ENCODE measurements at regions of chr5 and their contacts with region 1.

Region 1: GRCh38 chr5:83927140-83927733 is 206.6 kb upstream of the HAPLN1 start:
- DNase-seq: peak; percentile 75
- H3K4me3 ChIP-seq: no peak overlapping the region
- H3K27ac ChIP-seq: no peak overlapping the region
- H3K4me1 ChIP-seq: peaks cover 5% of the 10 kb centered on the region
- H3K27me3 ChIP-seq: peaks cover 0 to 3% of the 10 kb centered on the region in 2 experiments
- CTCF ChIP-seq: peak; percentile 76 to 84
- POLR2A ChIP-seq: no peak

Region 2: GRCh38 chr5:83718195-83718825 is 208.9 kb before region 1 on chr5:
- CTCF ChIA-PET with region 1: interaction called, 10 read pairs
- POLR2A ChIA-PET with region 1: no interaction called
- dilution Hi-C with region 1: no loop called
- intact Hi-C with region 1: loop called (anchors 1 kb)
- DNase-seq: peak; percentile 70
- H3K4me3 ChIP-seq: no peak overlapping the region
- H3K27ac ChIP-seq: no peak overlapping the region
- H3K4me1 ChIP-seq: peaks cover 4% of the 10 kb centered on the region
- H3K27me3 ChIP-seq: peaks cover 8% of the 10 kb centered on the region in 2 experiments
- CTCF ChIP-seq: peak; percentile 67 to 74
- POLR2A ChIP-seq: no peak

Region 3: GRCh38 chr5:83937837-83938236 is 10.6 kb after region 1 on chr5:
- CTCF ChIA-PET with region 1: interaction called, 18 read pairs
- POLR2A ChIA-PET with region 1: no interaction called
- dilution Hi-C with region 1: no loop called
- intact Hi-C with region 1: no loop called
- DNase-seq: no peak
- H3K4me3 ChIP-seq: no peak overlapping the region
- H3K27ac ChIP-seq: no peak overlapping the region
- H3K4me1 ChIP-seq: no peaks in the 10 kb centered on the region
- H3K27me3 ChIP-seq: no peaks in the 10 kb centered on the region
- CTCF ChIP-seq: no peak
- POLR2A ChIP-seq: no peak

Region 4: DNA sequence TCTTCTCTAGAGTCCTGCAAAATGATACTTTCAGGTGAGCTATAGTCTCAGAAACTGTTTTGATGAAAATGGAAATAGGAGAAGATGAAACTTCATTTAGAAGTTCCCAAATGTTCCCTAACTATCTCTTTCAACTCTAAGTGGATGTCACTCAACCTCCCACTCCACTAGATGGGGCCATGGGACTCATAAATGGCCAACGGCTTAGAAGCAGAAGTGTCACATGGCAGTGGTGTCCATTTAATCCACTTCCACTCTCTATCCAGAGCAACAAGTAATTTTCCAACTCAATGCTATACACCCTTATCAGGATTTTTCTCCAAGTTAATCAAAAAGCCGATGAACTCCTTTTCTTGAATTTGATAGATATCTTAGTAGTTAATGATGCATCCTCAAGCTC is 161.8 kb after region 1 on chr5:
- CTCF ChIA-PET with region 1: interaction called, 5 read pairs
- POLR2A ChIA-PET with region 1: no interaction called
- dilution Hi-C with region 1: no loop called
- intact Hi-C with region 1: loop called (anchors 5 kb)
- DNase-seq: peak; percentile 16
- H3K4me3 ChIP-seq: no peak overlapping the region
- H3K27ac ChIP-seq: no peak overlapping the region
- H3K4me1 ChIP-seq: no peaks in the 10 kb centered on the region
- H3K27me3 ChIP-seq: no peaks in the 10 kb centered on the region
- CTCF ChIP-seq: peak; percentile 6 to 25
- POLR2A ChIP-seq: no peak

Region 5: DNA sequence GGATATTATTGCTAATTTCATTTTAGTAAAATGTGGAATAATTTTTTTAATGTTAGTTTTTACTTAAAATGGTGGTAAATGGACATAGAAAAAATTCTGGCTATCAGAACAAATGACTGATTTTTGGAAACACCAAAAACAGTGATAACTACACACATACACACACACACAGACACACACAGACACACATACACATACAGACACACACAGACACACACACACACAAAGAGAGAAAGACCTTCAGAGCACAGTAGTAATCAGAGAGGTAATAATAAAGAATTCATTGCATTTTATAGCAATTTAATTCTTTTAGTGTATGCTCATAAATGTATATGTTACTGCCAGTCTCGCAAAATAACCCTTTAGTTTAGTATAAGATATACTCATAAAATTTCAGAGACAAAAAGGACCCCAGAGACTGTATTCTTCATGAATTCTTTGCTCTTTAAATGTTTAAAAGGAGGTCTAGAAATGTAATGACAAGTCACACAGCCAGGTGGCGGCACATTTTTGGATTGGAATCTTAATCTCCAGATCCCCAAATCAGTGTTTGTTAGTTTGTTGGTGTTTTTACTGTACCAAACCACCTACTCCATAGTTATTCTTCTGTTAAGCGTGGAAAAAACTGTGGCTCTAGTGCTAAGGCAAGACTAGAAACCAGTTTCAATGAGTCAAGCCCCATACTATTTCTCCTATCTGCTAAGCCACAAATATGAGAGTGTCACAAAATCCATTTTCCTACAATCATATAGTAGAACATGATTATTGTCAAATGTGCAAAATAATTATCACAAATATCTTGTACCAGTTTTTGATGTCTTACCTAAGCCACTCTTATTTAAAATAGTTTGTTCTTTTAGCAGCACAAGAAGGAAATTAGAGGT is 347.6 kb after region 1 on chr5:
- CTCF ChIA-PET with region 1: interaction called, 5 read pairs
- POLR2A ChIA-PET with region 1: no interaction called
- dilution Hi-C with region 1: no loop called
- intact Hi-C with region 1: loop called (anchors 1 kb)
- DNase-seq: peak; percentile 61
- H3K4me3 ChIP-seq: no peak overlapping the region
- H3K27ac ChIP-seq: no peak overlapping the region
- H3K4me1 ChIP-seq: no peaks in the 10 kb centered on the region
- H3K27me3 ChIP-seq: no peaks in the 10 kb centered on the region
- CTCF ChIP-seq: peak; percentile 39 to 45
- POLR2A ChIP-seq: no peak

Region 6: GRCh38 chr5:84450617-84451414 is 523.6 kb after region 1 on chr5:
- CTCF ChIA-PET with region 1: interaction called, 9 read pairs
- POLR2A ChIA-PET with region 1: no interaction called
- dilution Hi-C with region 1: no loop called
- intact Hi-C with region 1: loop called (anchors 10 kb)
- DNase-seq: peak; percentile 43
- H3K4me3 ChIP-seq: no peak overlapping the region
- H3K27ac ChIP-seq: no peak overlapping the region
- H3K4me1 ChIP-seq: peaks cover 8% of the 10 kb centered on the region
- H3K27me3 ChIP-seq: no peaks in the 10 kb centered on the region
- CTCF ChIP-seq: no peak
- POLR2A ChIP-seq: no peak